PC-9 (cell line): ENCODE measurements at regions of chr2 and their contacts with region 1.

Region 1: GRCh38 chr2:216006164-216006663 is 7.1 kb downstream of the MREG start:
- DNase-seq: peak; percentile 74 to 93
- H3K4me3 ChIP-seq: peak overlapping the region; percentile 36
- H3K27ac ChIP-seq: peak overlapping the region; percentile 98
- H3K4me1 ChIP-seq: peaks cover 68% of the 10 kb centered on the region
- H3K27me3 ChIP-seq: no peaks in the 10 kb centered on the region
- CTCF ChIP-seq: peak; percentile 5; the same call in 1 of the 2 replicates

Region 2: DNA sequence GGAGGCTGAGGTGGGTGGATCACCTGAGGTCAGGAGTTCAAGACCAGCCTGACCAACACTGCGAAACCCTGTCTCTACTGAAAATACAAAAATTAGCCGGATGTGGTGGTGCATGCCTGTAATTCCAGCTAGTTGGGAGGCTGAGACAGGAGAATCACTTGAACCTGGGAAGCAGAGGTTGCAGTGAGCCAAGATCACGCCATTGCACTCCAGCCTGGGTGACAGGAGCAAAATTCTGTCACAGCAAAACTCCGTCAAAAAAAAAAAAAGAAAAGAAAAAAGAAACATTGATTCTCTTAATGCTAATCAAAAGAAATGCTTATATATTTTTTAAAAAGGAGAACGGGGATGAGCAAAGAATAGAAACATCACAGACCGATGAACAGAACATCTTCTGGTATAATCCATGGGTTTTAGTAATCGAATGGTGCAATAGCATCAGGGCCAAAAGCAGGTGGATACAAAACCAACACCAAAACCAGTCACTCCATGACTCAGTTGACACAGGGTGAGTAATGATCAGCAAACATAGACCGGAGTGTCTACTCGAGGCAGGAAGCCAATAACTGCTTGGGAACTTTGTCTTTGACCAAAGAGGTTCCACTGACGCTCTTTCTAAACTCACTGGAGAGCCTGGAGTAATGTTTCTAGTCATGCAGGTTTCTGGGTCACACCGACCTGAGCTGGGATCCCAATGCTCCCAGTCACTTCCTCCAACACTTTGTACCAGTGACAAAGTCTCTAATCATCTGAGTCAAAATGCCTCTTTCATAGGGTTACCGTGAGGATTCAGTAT is 23.9 kb before region 1 on chr2:
- CTCF ChIA-PET with region 1: no interaction called
- POLR2A ChIA-PET with region 1: no interaction called
- intact Hi-C with region 1: loop called (anchors 1 kb)
- DNase-seq: peak; percentile 81 to 100
- H3K4me3 ChIP-seq: peak overlapping the region; percentile 26; the same call in 1 of the 2 replicates
- H3K27ac ChIP-seq: peak overlapping the region; percentile 98
- H3K4me1 ChIP-seq: peaks cover 63% of the 10 kb centered on the region
- H3K27me3 ChIP-seq: no peaks in the 10 kb centered on the region
- CTCF ChIP-seq: no peak

Region 3: GRCh38 chr2:216108967-216109921 is 103.0 kb after region 1 on chr2 and contains the start of gene XRCC5:
- CTCF ChIA-PET with region 1: no interaction called
- POLR2A ChIA-PET with region 1: no interaction called
- intact Hi-C with region 1: no loop called
- DNase-seq: peak; percentile 92 to 97
- H3K4me3 ChIP-seq: peak within 1 kb of the TSS; percentile 71
- H3K27ac ChIP-seq: peak within 1 kb of the TSS; percentile 54
- H3K4me1 ChIP-seq: peaks cover 18% of the 10 kb centered on the region
- H3K27me3 ChIP-seq: no peaks in the 10 kb centered on the region
- CTCF ChIP-seq: no peak
- total RNA-seq, gene XRCC5: 242 and 275 TPM in 2 replicates

Region 4: DNA sequence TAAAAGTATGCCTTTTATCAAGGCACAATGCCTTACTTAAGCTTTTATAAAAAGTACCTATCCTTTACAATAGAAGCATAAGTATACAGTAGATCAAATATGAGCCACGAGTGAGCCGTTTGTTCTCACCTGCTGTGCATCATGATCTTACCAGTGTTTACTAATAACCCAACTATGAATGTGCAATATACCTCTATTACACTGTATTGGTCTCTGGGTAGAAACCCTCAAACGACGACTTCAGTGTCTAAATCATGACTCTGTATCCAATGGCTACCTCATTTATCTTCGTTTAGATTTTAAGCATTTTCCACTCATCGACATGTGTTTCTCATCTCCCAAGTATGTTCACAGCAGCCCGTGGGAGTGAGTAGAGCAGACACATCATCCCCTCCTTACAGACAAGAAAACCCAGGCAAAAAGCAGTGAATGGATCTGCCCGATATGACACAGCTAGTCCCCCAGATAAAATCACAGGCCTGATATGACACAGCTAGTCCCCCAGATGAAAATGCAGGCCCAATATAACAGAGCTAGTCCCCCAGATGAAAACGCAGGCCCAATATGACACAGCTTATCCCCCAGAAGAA is 1716.8 kb after region 1 on chr2:
- CTCF ChIA-PET with region 1: interaction called, 13 read pairs
- POLR2A ChIA-PET with region 1: no interaction called
- intact Hi-C with region 1: no loop called
- DNase-seq: no peak
- H3K4me3 ChIP-seq: no peak overlapping the region
- H3K27ac ChIP-seq: no peak overlapping the region
- H3K4me1 ChIP-seq: no peaks in the 10 kb centered on the region
- H3K27me3 ChIP-seq: no peaks in the 10 kb centered on the region
- CTCF ChIP-seq: no peak